Lower lobe of right lung (tissue), 2 donors: ENCODE measurements at regions of chr16 and their contacts with region 1.

Region 1: DNA sequence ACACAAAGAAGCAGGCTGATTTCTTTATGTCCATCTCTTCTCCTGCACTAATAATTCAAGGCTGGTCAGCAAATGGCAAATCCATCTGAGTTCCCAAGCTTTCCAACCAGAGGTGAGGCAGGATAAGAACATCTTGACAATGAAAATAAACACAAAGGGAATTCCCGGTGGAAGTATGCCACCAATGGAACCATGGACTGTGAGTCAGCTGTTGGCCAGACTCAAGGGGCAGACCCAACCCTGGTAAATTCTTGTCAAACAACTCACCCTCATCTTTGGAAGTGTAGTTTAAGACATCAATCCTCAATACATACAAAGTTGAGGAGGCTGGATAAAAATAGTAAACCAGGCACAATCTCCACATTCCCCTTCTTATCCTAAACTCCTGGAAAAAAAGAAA is 74.3 kb upstream of the CES5A start:
- DNase-seq: no peak
- ATAC-seq: no peak
- H3K4me3 ChIP-seq: no peak overlapping the region
- H3K27ac ChIP-seq: no peak overlapping the region
- H3K4me1 ChIP-seq: no peaks in the 10 kb centered on the region
- H3K27me3 ChIP-seq: no peaks in the 10 kb centered on the region
- CTCF ChIP-seq: no peak

Region 2: GRCh38 chr16:56317998-56318826 is 368.7 kb after region 1 on chr16:
- intact Hi-C with region 1: loop called (anchors 5 kb)
- DNase-seq: peak; percentile 82
- ATAC-seq: peak; percentile 97
- H3K4me3 ChIP-seq: peak overlapping the region; percentile 11
- H3K27ac ChIP-seq: no peak overlapping the region
- H3K4me1 ChIP-seq: peaks cover 9% of the 10 kb centered on the region
- H3K27me3 ChIP-seq: peaks cover 8% of the 10 kb centered on the region
- CTCF ChIP-seq: peak; percentile 96